ENCODE measurements at regions of chr10 and their contacts with region 1.

Region 1: DNA sequence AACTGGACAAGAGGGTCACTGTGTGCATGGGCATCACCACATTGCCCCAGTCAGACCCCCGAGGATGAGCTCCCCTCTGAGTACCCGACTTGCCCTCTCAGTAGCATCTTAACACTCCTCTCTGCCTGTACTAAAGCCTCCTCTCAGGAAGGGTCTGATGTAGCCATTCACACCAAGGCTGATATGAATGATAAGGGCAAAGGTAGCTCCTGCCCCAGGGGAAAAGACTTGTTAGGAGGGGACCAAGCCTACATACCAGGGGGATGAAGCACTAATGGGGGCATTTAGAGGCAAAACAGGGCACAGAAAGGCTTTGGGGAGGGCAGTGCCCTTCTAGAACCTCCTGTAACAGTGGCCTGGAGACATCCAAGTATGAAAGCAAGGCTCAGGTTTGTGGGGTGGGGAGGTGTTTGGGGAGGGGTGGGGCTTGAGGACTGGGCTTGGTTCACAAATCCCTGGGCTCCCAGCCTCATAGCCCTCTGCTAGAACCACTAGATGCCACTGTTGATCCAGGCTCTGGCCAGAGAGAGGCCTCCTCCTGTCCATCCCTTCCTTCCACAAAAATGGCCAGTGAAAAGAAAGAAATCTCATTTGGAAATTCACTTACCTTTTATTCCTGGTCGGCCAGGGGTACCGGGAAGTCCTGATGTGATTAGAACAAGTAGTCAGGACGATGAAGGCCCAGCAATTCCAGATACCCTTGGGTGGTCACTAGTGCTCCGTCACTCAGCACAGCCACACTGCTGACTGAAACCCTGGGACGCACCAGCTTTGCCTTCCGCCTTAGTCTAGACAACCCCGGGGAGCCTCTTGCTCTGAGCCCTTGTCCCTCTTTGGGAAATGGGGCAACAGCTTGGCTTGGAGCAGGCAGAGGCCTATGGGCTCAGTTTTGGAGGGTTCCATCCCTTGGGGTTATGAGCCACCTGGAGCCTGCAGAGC is 40.3 kb downstream of the COL17A1 start:
- DNase-seq: peak; percentile 48 to 62
- H3K4me3 ChIP-seq: no peak overlapping the region
- H3K27ac ChIP-seq: no peak overlapping the region
- H3K4me1 ChIP-seq: peaks cover 20% of the 10 kb centered on the region
- H3K27me3 ChIP-seq: no peaks in the 10 kb centered on the region
- CTCF ChIP-seq: peak; percentile 71

Region 2: DNA sequence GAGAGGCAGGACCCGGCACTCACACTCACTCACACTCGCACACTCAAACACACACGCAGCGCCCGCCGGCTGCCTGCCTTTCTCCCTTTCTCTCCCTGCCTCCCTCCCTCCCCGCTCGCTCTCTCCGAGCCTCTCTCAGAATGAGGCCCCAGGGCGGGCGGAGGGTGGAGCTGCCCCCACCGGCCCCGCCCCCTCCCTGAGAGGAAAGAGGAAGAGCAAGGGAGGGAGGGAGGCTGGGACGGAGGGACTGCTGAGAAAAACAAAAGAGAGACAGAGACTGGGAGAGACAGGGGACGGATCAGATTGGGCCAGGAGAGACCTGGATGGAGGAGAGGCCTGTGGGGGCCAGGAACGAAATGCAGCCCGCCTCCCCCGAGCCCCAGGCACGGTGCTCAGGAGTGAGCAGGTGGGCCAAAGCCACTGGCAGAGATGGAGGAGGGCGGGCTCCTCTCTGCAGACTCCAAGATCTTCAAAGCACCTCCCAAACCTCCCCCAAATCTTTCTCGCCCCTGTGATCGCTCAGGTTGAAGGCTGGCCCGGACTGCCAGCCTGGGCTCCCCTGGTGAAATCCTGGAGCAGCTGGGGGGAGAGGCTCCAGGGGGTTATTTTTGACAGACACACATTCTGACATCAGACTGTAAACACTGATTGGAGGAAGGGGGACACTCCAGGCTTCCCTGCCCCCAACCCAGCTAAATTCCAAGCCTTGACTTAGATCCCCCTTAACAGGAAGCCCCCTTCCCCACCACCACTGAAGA is 1930.4 kb before region 1 on chr10:
- CTCF ChIA-PET with region 1: interaction called, 12 read pairs
- POLR2A ChIA-PET with region 1: no interaction called
- intact Hi-C with region 1: no loop called
- DNase-seq: peak; percentile 39 to 66
- H3K4me3 ChIP-seq: peak overlapping the region; percentile 66; the same call in 1 of the 2 replicates
- H3K27ac ChIP-seq: no peak overlapping the region
- H3K4me1 ChIP-seq: no peaks in the 10 kb centered on the region; the same call in none of the 2 replicates
- H3K27me3 ChIP-seq: no peaks in the 10 kb centered on the region
- CTCF ChIP-seq: no peak

Region 3: DNA sequence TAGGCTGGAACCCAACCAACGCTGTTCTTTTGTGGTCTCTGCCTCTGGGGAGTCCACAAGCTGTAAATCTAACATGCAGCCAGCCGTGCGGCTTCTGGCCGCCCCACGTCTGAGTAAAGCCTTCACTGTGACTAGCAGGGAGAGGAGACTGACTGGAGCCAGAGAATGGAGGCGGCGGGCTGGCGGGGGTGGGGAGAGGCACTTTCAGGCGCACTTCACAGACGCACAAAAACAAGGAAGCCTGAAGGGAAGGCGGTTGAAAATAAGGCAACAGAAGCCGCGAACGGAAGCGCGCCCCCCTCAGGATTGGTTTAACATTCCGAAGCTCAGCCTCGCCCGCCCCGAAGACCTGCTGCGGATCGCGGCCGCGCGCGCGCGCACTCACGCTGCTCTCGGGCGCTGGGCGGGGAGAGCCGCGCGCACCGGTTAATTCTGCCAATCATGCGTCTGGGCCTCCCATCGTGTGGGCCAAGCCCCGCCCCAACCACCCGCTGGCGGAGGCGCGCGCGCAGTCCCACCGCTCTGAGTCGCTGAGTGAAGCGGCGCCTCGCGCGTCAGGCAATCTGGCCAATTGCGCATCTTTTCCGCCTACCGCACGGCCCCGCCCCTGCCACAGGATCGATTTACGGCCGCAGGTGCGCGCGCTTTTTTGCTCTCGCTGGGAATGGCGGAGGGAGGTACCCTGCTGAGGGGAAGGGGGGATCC is 76.3 kb after region 1 on chr10 and contains the start of gene SFR1:
- CTCF ChIA-PET with region 1: no interaction called
- POLR2A ChIA-PET with region 1: interaction called, 4 read pairs
- intact Hi-C with region 1: loop called (anchors 1 kb)
- DNase-seq: peak; percentile 90 to 97
- H3K4me3 ChIP-seq: peak within 1 kb of the TSS; percentile 85
- H3K27ac ChIP-seq: peak within 1 kb of the TSS; percentile 97
- H3K4me1 ChIP-seq: peaks cover 45% of the 10 kb centered on the region
- H3K27me3 ChIP-seq: no peaks in the 10 kb centered on the region
- CTCF ChIP-seq: peak; percentile 57
- total RNA-seq, gene SFR1: 4.3 TPM in 2 replicates

Region 4: GRCh38 chr10:104254493-104255310 is 209.3 kb after region 1 on chr10 and contains the start of gene GSTO1:
- CTCF ChIA-PET with region 1: interaction called, 3 read pairs
- POLR2A ChIA-PET with region 1: interaction called, 12 read pairs
- intact Hi-C with region 1: no loop called
- DNase-seq: peak; percentile 51 to 52
- H3K4me3 ChIP-seq: peak within 1 kb of the TSS; percentile 83
- H3K27ac ChIP-seq: peak within 1 kb of the TSS; percentile 60
- H3K4me1 ChIP-seq: peaks cover 30% of the 10 kb centered on the region
- H3K27me3 ChIP-seq: no peaks in the 10 kb centered on the region
- CTCF ChIP-seq: no peak
- total RNA-seq, gene GSTO1: 71.0 and 77.3 TPM in 2 replicates

Region 5: GRCh38 chr10:104353325-104354048 is 308.1 kb after region 1 on chr10 and contains the start of gene CFAP58:
- CTCF ChIA-PET with region 1: no interaction called
- POLR2A ChIA-PET with region 1: no interaction called
- intact Hi-C with region 1: loop called (anchors 2 kb)
- DNase-seq: peak; percentile 48 to 84
- H3K4me3 ChIP-seq: peak within 1 kb of the TSS; percentile 21; the same call in 1 of the 2 replicates
- H3K27ac ChIP-seq: no peak within 1 kb of the TSS
- H3K4me1 ChIP-seq: peaks cover 30% of the 10 kb centered on the region
- H3K27me3 ChIP-seq: peaks cover 3% of the 10 kb centered on the region; the same call in 1 of the 2 replicates
- CTCF ChIP-seq: peak; percentile 62
- total RNA-seq, gene CFAP58: 0.15 and 0.31 TPM in 2 replicates

Measured in PC-9 (cell line).